ENCODE measurements at regions of chr16 and their contacts with region 1.

Region 1: DNA sequence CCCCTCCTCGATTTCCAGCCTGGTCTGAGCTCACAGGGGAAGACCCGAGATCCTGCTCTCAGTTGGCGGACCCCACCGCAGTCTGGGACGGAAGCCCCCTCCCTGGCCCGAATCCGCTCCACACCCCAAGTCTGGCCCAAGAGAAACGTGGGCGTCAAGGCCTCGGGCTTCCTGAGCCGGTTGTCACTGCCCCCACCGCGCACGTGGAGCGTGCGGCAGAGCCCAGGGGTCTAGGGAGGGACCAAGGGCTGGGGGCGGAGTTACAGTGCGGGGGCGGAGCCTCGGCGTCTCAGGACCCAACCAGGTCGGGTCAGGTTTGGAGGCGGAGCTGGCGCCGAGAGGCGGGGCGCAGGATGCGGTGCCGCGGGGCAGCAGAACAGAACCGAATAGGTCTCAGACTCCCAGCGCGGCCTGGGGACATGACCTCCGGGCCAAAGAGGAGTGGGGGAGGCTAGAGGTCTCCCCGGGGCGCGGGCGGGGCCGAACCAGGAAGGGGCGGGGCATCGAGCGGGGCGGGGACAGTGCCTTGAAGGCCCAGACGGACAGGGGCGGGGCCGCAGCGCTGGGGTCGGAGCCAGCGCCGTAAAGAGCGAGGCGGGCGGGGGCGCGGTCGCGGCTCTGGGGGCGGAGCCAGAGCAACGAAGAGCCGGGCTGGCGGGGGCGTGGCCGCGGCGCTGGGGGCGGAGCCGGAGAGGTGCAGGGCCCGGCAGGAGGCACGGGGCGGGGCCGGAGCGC is 431 bp upstream of the ZFPM1 start:
- DNase-seq: peak; percentile 100
- ATAC-seq: peak; percentile 68
- H3K4me3 Mint-ChIP-seq: peak overlapping the region; percentile 74
- H3K27ac Mint-ChIP-seq: peak overlapping the region; percentile 78
- H3K4me1 Mint-ChIP-seq: peaks cover 24% of the 10 kb centered on the region
- H3K27me3 Mint-ChIP-seq: no peaks in the 10 kb centered on the region

Region 2: DNA sequence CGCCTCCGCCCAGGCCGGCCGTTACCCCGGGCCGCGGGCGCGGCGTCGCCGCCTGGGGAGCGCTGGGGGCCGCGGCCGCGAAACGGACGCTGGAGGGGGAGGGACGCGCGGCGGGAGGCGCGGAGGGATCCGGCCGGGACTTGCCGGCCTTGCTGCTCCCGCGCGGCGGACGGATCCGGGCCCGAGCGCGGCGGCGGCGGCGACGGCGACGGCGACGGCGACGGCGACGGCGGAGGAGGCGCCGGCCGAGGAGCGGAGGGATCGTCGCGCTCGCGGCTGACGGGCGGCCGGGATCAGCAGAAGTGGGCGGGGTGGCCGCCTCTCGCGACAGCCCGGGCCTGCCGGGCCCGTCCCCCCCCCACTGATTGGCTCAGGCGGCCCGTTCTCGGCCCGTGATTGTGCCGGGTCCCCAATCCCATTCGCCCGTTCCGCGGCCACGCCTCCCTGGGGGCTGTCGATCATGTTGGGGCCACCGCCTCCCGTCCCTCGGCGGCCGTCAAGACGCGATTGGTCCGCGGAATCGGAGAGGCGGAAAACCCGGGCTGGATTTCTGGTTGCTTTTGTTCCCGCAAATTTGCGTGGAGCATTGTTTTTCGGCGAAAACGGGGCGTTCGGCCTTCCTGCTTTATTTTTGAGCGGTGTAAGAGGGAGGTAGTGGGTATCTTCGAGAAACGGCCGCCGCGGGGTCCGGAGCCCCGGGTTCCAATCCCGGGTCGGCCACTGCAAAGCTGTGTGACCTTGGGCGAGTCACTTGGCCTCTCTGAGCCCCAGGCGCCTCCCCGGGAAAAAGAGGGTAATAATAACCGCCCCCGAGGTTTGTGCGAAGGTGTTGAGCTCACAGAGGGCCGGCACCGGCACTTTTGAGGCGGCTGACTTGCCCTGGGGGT is 959.7 kb before region 1 on chr16 and contains the start of gene ZCCHC14:
- CTCF ChIA-PET with region 1: no interaction called
- POLR2A ChIA-PET with region 1: no interaction called
- intact Hi-C with region 1: loop called (anchors 10 kb)
- DNase-seq: peak; percentile 100
- ATAC-seq: peak; percentile 94
- H3K4me3 Mint-ChIP-seq: peak within 1 kb of the TSS; percentile 83
- H3K27ac Mint-ChIP-seq: peak within 1 kb of the TSS; percentile 85
- H3K4me1 Mint-ChIP-seq: peaks cover 48% of the 10 kb centered on the region
- H3K27me3 Mint-ChIP-seq: no peaks in the 10 kb centered on the region
- total RNA-seq, gene ZCCHC14: 10.1 to 12.9 TPM

Region 3: DNA sequence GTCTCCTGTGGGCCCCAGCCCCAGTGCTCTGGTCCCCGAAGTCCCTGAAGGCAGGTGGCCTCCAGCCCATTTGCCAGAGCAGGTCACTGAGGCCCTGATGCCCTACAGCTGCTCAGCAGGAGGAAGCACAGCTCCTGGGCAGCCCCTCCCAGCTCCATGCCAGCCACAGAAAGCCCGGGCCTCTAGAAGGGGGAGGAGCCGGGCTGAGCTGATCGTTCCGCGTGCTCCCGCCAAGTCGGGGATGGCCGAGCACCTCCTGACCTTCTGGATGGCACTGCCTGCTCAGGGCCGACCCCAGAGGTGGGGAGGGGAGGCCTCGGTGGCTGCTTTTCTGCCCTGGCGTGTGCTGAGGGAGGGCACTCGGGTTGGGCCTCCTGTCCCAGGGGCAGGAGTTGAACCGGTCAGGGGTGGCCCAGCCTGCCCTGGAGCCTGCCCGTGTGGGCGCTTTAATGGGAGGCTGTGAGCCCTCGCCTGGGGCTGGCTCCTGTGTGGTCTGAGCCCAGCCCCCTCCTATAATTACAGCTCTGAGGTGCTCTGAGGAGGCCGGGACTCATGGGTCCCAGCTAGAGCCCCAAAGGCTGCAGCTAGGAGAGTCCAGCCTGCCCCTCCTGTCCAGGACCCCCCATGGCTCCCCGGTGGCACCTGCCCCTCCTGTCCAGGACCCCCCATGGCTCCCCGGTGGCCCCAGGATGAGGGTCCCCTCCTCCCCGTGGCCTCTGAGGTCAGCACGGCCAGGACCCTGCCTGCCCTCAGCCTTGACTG is 30.2 kb after region 1 on chr16:
- CTCF ChIA-PET with region 1: no interaction called
- POLR2A ChIA-PET with region 1: no interaction called
- intact Hi-C with region 1: no loop called
- DNase-seq: no peak
- ATAC-seq: no peak
- H3K4me3 Mint-ChIP-seq: no peak overlapping the region
- H3K27ac Mint-ChIP-seq: no peak overlapping the region
- H3K4me1 Mint-ChIP-seq: peaks cover 26% of the 10 kb centered on the region
- H3K27me3 Mint-ChIP-seq: no peaks in the 10 kb centered on the region

Region 4: DNA sequence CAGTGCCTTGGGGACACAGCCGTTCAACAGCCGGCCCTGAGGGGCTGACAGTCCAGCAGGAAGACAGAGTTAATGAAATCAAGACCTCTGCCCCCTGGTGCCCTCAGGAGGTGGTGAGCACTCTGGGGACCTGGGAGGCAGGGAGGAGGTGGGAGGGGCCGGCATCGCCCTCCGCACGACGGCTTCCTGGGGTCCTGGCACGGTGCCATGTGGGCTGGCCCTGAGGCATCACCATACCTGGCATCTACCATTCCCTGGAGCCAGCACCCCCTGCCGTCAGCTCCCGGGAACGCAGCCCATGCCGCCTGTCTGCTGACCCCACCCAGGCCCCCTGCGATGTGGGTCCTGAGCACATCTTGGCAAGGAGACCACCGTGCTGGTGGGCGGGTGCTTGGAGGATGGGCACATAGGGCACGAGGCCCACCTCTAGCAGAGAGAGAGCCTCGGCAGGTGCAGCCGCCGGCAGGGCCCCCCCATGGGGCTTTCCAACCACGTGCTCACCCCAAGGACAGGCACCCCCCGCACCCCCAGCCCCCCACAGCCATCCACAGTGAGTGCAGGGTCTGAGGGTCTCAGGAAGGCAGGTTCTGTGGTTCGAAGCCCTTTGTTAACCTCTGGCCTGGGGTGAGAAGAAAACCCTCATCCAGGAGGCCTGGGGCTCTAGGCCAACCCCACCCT is 52.9 kb after region 1 on chr16:
- CTCF ChIA-PET with region 1: no interaction called
- POLR2A ChIA-PET with region 1: no interaction called
- intact Hi-C with region 1: loop called in 1 of 2 experiments (anchors 1 kb)
- DNase-seq: peak; percentile 84
- ATAC-seq: peak; percentile 82
- H3K4me3 Mint-ChIP-seq: no peak overlapping the region
- H3K27ac Mint-ChIP-seq: no peak overlapping the region
- H3K4me1 Mint-ChIP-seq: no peaks in the 10 kb centered on the region
- H3K27me3 Mint-ChIP-seq: no peaks in the 10 kb centered on the region

Region 5: DNA sequence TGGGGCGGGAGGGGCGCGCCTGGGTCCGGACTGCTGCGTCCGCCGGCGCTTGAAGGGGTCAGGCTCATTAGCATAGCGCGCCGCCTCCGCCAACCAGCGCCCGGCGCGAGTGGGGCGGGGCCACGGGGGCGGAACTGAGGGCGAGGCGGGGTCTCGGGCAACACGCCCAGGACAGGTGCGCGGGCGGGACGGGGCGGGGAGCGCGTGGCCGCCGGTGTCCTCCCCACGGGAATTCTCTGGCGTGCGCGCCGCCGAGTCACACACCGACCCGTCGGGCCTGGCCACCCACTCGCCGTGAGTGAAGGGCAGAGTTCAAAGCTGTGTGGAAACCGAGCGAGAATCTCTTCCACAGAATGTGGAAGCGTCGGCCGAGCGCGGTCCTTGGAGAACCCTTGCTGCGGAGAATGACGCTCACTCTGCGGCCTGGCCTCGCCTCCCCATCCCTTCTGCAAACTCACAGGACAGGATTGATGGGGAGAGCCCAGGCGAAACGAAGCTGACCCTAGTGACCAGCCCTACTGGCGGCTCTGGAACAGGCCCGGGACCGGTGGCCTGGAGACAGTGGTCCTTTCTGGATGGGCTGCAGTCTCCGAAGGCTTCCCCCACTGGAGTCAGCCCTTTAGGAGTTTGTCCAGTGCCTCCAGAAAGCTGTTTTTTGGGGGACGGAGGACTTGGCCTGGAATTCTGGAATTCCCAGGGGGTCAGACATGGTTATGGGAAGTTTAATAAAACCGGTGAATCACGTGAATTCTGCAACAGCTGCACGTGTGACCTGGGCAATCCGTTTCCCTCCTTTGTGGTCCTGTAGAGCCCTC is 234.0 kb after region 1 on chr16 and contains the start of gene SNAI3:
- CTCF ChIA-PET with region 1: no interaction called
- POLR2A ChIA-PET with region 1: no interaction called
- intact Hi-C with region 1: loop called in 1 of 2 experiments (anchors 1 kb)
- DNase-seq: peak; percentile 91
- ATAC-seq: peak; percentile 69
- H3K4me3 Mint-ChIP-seq: peak within 1 kb of the TSS; percentile 70
- H3K27ac Mint-ChIP-seq: peak within 1 kb of the TSS; percentile 37
- H3K4me1 Mint-ChIP-seq: peaks cover 42% of the 10 kb centered on the region
- H3K27me3 Mint-ChIP-seq: no peaks in the 10 kb centered on the region
- total RNA-seq, gene SNAI3: 3.6 to 4.1 TPM

Region 6: GRCh38 chr16:88727871-88728270 is 275.2 kb after region 1 on chr16:
- CTCF ChIA-PET with region 1: no interaction called
- POLR2A ChIA-PET with region 1: no interaction called
- intact Hi-C with region 1: no loop called
- DNase-seq: no peak
- ATAC-seq: no peak
- H3K4me3 Mint-ChIP-seq: no peak overlapping the region
- H3K27ac Mint-ChIP-seq: no peak overlapping the region
- H3K4me1 Mint-ChIP-seq: no peaks in the 10 kb centered on the region
- H3K27me3 Mint-ChIP-seq: no peaks in the 10 kb centered on the region

Region 7: DNA sequence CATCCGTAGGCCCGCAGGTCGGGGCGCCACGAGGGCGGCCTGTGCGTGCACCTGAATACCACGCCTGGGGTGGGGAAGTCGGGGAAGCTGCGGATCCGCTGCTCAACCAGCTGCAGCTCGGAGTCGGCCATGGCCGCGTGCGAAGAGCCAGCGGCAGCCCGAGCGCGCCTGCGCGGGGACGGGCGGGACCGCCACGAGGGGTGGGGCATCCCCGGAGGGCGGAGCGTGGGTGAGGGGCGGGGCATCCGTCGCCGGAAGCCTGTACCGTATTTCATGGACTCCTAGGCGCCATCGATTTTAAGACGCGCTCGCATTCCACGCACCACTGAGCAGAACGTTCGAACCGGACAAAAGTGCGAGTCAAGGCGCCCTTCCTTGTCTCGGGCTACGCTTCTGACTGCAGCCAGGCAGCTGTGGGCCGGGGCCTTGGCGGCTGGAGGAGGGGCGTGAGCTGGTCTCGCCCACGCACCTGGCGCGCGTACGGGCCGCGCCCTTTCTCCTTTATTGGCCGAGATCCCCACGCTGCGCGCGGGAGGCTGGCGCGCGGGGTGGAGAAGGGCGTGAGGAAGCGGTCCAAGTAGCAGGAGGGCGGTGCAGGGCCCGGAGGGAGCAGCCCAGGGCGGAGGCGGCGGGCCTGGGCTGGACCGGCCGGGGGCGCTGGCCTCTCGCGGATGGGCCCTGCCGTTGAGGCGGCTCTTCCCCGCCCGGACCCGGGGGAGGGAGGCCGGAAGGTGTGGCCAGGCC is 359.3 kb after region 1 on chr16 and contains the start of gene APRT:
- CTCF ChIA-PET with region 1: no interaction called
- POLR2A ChIA-PET with region 1: no interaction called
- intact Hi-C with region 1: loop called in 1 of 2 experiments (anchors 1 kb)
- DNase-seq: peak; percentile 99
- ATAC-seq: peak; percentile 76
- H3K4me3 Mint-ChIP-seq: peak within 1 kb of the TSS; percentile 86
- H3K27ac Mint-ChIP-seq: peak within 1 kb of the TSS; percentile 94
- H3K4me1 Mint-ChIP-seq: peaks cover 22% of the 10 kb centered on the region
- H3K27me3 Mint-ChIP-seq: no peaks in the 10 kb centered on the region
- total RNA-seq, gene APRT: 105 to 179 TPM

Region 8: GRCh38 chr16:89246903-89247733 is 794.5 kb after region 1 on chr16:
- CTCF ChIA-PET with region 1: no interaction called
- POLR2A ChIA-PET with region 1: no interaction called
- intact Hi-C with region 1: loop called in 1 of 2 experiments (anchors 2 kb)
- DNase-seq: peak; percentile 99
- ATAC-seq: peak; percentile 93
- H3K4me3 Mint-ChIP-seq: peak overlapping the region; percentile 71
- H3K27ac Mint-ChIP-seq: no peak overlapping the region
- H3K4me1 Mint-ChIP-seq: peaks cover 15% of the 10 kb centered on the region
- H3K27me3 Mint-ChIP-seq: no peaks in the 10 kb centered on the region

Region 9: DNA sequence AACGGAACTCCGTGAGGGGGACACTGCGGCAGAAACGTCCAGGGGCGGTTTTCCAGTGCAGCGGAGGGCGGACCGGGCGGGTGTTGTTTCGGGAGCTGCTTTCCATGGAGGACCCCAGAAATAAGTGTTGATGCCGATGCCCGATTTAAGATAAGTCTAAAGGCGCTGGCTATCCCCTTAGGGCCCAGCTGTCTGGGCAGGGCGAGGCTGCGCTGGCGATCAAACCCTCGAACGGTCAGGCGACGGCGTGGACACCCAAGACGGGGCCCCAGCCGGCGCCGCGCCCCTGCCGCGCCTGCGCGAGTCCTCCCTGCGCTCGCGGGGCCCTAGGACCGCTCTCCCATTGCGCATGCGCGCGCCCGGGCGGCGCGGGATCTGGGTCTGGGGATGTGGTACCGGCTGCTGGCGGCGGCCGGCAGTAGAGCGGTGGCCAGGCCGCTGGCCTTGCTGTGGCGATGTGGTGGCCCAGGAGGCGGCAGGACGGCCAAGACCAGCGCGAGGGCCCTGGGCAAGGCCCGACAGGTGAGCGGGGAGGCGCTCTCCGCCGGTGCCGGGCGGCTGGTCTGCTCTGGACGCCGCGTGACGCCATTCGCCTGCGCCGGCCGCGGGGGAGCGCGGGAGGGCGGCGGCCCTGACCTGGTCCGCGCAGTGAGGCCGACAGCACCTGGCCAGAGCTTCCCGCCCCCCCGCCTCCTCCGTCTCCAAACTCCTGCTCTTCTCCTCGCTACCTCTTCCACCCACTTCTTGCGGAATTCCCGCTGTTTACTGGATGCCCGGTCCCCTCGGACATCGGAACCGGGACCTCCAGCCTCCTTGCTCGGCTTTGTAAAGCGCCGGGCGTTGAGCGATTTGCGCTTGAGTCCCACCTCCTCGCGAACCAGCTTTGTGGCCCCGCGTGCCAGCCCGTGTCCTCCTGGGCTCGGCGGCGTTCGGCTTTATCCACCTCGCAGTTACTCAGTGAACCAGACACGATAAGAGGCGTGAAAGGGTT is 1519.9 kb after region 1 on chr16:
- CTCF ChIA-PET with region 1: no interaction called
- POLR2A ChIA-PET with region 1: no interaction called
- intact Hi-C with region 1: loop called in 1 of 2 experiments (anchors 10 kb)
- DNase-seq: peak; percentile 94
- ATAC-seq: peak; percentile 94
- H3K4me3 Mint-ChIP-seq: peak overlapping the region; percentile 99
- H3K27ac Mint-ChIP-seq: peak overlapping the region; percentile 95
- H3K4me1 Mint-ChIP-seq: peaks cover 32% of the 10 kb centered on the region
- H3K27me3 Mint-ChIP-seq: no peaks in the 10 kb centered on the region